ENCODE measurements at regions of chr12 and their contacts with region 1.

Region 1: DNA sequence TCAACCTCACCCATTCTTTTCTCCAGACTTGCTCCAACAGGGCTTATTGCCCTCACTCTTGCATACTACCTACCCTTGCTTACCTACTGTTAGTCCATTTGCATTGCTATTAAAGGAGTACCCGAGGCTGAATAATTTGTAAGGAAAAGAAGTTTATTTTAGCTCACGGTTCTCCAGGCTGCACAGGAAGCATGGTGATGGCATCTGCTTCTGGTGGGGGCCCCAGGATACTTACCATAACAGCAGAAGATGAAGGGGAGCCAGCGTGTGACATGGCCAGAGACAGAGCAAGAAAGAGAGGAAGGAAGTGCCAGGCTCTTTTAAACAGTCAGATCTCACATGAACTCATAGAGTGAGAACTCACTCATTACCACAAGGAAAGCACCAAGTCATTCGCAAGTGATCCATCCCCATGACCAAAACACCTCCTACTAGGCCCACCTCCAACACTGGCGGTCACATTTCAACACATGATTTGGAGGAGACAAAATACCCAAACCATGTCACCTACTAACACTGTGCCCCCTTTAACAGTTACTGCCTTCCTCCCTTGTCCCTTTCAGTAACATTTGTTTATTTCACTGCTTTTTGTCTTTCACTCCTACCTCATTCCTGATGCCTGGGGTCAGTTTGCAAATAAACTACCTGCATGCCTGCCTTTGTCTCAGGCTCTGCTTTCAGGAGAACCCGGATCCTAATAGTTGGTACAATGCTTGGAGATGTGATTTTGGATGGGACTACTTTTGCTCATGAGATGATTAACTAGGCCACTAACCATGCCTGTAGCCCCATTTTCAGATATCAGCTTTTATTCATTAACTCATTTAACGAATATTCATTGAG is 41.6 kb upstream of the CSRP2 start:
- DNase-seq: no peak
- ATAC-seq: no peak
- H3K4me3 ChIP-seq: no peak overlapping the region
- H3K27ac ChIP-seq: no peak overlapping the region
- H3K4me1 ChIP-seq: peaks cover 0 to 12% (median 0%) of the 10 kb centered on the region in 12 donors
- H3K27me3 ChIP-seq: no peaks in the 10 kb centered on the region
- CTCF ChIP-seq: no peak
- POLR2A ChIP-seq: no peak

Region 2: DNA sequence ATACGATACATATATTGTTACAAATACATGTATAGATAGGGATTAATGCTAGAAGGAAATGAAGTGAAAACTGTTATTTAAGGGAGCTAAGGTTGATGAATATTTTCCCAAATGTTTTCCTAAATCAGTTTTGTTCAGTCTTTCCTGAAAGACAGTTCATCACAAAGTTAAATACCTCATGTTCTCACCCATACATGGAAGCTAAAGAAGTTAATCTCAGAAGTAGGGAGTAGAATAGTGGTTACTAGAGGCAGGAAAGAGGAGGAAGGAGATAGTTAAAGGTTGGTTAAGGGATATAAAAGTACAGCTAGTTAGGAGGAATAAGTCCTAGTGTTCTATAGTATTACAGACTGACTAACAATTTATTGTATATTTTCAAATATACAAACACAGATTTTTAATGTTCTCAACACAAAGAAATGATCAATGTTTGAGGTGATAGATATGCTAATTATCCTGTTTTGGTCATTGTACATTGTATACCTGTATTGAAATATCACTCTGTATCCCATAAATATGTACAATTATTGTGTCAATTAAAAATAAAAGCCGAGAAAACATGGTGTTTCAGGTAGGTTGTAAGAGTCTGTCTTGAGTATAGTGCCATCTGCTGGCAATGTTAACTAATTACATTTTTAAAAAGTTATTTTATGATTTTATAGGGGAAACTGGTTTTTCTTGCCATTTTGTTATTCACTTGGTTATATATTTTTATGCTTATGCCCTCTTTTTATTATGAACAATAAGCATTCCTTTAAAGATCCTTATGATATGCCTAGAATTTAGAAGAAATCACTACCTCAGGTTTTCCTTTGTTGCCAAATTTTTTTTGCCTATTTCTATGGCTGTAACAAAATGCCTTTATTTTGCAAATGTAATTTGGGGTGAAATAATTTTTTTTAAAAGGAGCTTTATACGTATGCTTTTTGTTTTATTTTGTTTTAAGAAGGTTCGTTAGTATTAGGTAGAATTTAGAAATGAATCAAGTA is 129.5 kb before region 1 on chr12:
- intact Hi-C with region 1: no loop called
- DNase-seq: no peak
- ATAC-seq: no peak
- H3K4me3 ChIP-seq: no peak overlapping the region
- H3K27ac ChIP-seq: peak overlapping the region in 1 of 12 donors; percentile 37
- H3K4me1 ChIP-seq: peaks cover 0 to 65% (median 24%) of the 10 kb centered on the region in 12 donors
- H3K27me3 ChIP-seq: no peaks in the 10 kb centered on the region
- CTCF ChIP-seq: peak; percentile 42 to 88 (median 74)
- POLR2A ChIP-seq: no peak

Region 3: DNA sequence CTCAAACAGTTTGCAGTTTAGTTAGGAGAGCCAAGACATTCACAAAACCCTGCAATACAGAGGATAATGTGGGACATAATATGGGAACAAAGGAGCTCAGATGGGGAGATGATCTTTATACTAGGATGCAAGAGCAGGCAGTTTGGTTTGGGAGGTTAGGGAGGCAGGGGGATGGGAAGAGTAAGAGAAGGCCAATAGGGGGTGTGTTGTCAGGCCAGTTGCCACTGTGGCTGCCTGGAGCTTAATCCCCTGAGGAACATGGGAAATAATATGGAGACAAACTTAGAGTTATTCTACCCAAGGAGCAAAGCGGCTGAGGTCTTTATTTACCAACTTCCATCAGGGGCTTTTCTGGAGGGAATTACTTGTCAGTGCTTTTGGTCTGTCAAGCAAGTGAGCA is 31.6 kb before region 1 on chr12:
- intact Hi-C with region 1: loop called in 1 of 10 experiments (anchors 5 kb)
- DNase-seq: no peak
- ATAC-seq: no peak
- H3K4me3 ChIP-seq: no peak overlapping the region
- H3K27ac ChIP-seq: no peak overlapping the region
- H3K4me1 ChIP-seq: peaks cover 0 to 8% (median 0%) of the 10 kb centered on the region in 12 donors
- H3K27me3 ChIP-seq: no peaks in the 10 kb centered on the region
- CTCF ChIP-seq: no peak
- POLR2A ChIP-seq: no peak

Region 4: DNA sequence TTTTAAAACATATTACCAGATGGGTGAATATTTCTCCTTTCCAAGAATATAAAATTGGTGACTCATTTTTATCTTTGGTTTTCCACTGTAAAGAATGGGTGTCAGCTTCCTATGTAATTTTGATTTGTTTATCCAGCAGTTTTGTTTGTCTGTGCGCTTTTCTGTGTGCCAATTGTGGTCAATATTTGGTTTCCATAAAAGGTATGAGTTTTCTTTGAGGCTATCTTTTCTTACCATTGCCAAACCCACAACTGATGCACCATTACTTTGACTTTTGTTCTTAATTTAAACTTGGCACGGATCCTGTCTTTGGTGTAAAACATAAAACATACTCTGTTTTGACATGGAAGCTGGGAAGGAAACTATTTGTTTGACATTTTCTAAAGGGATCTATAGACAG is 831.5 kb after region 1 on chr12:
- intact Hi-C with region 1: loop called in 1 of 10 experiments (anchors 5 kb)
- DNase-seq: no peak
- ATAC-seq: no peak
- H3K4me3 ChIP-seq: no peak overlapping the region
- H3K27ac ChIP-seq: no peak overlapping the region
- H3K4me1 ChIP-seq: no peaks in the 10 kb centered on the region
- H3K27me3 ChIP-seq: no peaks in the 10 kb centered on the region
- CTCF ChIP-seq: no peak
- POLR2A ChIP-seq: no peak

Measured in heart left ventricle (tissue), 16 donors.